Sigmoid colon (tissue), 7 donors: ENCODE measurements at regions of chr4 and their contacts with region 1.

Region 1: GRCh38 chr4:12852338-12853307 is 631.5 kb downstream of the RAB28 start:
- DNase-seq: no peak
- H3K4me3 ChIP-seq: no peak overlapping the region
- H3K27ac ChIP-seq: peak overlapping the region in 3 of 4 donors; percentile 13 to 58 (median 44)
- H3K4me1 ChIP-seq: peaks cover 0 to 9% (median 5%) of the 10 kb centered on the region in 4 donors
- H3K27me3 ChIP-seq: no peaks in the 10 kb centered on the region
- CTCF ChIP-seq: peak; percentile 66 to 75 (median 70)
- EP300 ChIP-seq: no peak
- POLR2A ChIP-seq: no peak

Region 2: GRCh38 chr4:13207226-13207625 is 354.6 kb after region 1 on chr4:
- intact Hi-C with region 1: loop called (anchors 10 kb)
- DNase-seq: no peak
- H3K4me3 ChIP-seq: no peak overlapping the region
- H3K27ac ChIP-seq: no peak overlapping the region
- H3K4me1 ChIP-seq: peaks cover 0 to 10% (median 0%) of the 10 kb centered on the region in 4 donors
- H3K27me3 ChIP-seq: no peaks in the 10 kb centered on the region
- CTCF ChIP-seq: no peak
- EP300 ChIP-seq: no peak
- POLR2A ChIP-seq: no peak

Region 3: GRCh38 chr4:13298655-13299054 is 446.0 kb after region 1 on chr4:
- intact Hi-C with region 1: loop called (anchors 5 kb)
- DNase-seq: peak; percentile 95
- H3K4me3 ChIP-seq: peak overlapping the region in 3 of 4 donors; percentile 30 to 40 (median 38)
- H3K27ac ChIP-seq: peak overlapping the region in 3 of 4 donors; percentile 84 to 87 (median 84)
- H3K4me1 ChIP-seq: peaks cover 0 to 40% (median 26%) of the 10 kb centered on the region in 4 donors
- H3K27me3 ChIP-seq: no peaks in the 10 kb centered on the region
- CTCF ChIP-seq: peak in 1 of 4 experiments; percentile 29
- EP300 ChIP-seq: peak; percentile 84 to 95 (median 86)
- POLR2A ChIP-seq: no peak

Region 4: DNA sequence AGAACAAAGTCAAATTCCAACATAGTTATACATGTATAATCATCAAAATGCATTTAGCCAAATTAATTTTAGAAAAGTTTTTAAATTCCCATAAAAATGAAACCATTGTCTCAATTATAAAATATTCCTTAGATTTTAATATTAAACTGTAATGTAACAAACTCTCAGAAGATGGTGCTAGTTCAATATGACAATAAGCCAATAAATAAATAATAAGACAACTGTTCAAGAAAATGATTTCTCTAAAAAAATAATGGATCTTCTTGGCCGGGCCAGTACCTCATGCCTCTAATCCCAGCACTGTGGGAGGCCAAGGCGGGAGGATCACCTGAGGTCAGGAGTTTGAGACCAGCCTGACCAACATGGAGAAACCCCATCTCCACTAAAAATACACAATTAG is 551.2 kb after region 1 on chr4:
- intact Hi-C with region 1: loop called (anchors 10 kb)
- DNase-seq: no peak
- H3K4me3 ChIP-seq: no peak overlapping the region
- H3K27ac ChIP-seq: no peak overlapping the region
- H3K4me1 ChIP-seq: peaks cover 0 to 14% (median 0%) of the 10 kb centered on the region in 4 donors
- H3K27me3 ChIP-seq: no peaks in the 10 kb centered on the region
- CTCF ChIP-seq: no peak
- EP300 ChIP-seq: no peak
- POLR2A ChIP-seq: no peak

Region 5: GRCh38 chr4:13484122-13484748 is 631.6 kb after region 1 on chr4 and contains the start of gene RAB28:
- intact Hi-C with region 1: loop called (anchors 5 kb)
- DNase-seq: peak; percentile 98
- H3K4me3 ChIP-seq: peak within 1 kb of the TSS; percentile 80 to 92 (median 90)
- H3K27ac ChIP-seq: peak within 1 kb of the TSS; percentile 95 to 97 (median 96)
- H3K4me1 ChIP-seq: peaks cover 0 to 33% (median 17%) of the 10 kb centered on the region in 4 donors
- H3K27me3 ChIP-seq: no peaks in the 10 kb centered on the region
- CTCF ChIP-seq: no peak
- EP300 ChIP-seq: no peak
- POLR2A ChIP-seq: peak; percentile 45 to 68
- total RNA-seq, gene RAB28: 24.1 to 32.1 (median 28.7) TPM